Activated T-helper 2 cell treated with anti-CD3 and anti-CD28 coated beads, Interferon-gamma antibody, Interleukin-2, Interleukin-4, amounts not matched to agents 10 μg/mL and 5 μg/mL and 100 μg/mL, durations not matched to agents 14 hours and 24 hours and 36 hours (primary cell): ENCODE measurements at regions of chr6 and their contacts with region 1.

Region 1: DNA sequence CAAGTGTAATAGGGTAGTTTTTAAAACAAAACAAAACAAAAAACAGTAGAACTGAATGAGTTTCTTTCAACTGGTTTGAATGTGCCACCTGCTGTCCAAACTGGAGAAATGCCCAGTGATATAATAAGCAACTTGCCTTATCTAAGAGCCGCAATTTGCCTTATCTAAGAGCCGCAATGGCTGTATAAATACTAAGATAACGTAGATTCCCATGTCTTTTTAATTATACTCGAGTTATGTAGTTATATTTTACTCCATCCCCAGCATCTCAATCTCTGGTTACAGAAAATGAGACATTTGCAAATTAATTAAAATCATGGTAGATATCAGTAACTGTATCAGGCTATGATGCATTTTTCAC is 67.2 kb downstream of the RPP40 start:
- DNase-seq: no peak
- H3K4me3 Mint-ChIP-seq: no peak overlapping the region
- H3K27ac Mint-ChIP-seq: no peak overlapping the region
- H3K4me1 Mint-ChIP-seq: peaks cover 56% of the 10 kb centered on the region
- H3K27me3 Mint-ChIP-seq: no peaks in the 10 kb centered on the region

Region 2: DNA sequence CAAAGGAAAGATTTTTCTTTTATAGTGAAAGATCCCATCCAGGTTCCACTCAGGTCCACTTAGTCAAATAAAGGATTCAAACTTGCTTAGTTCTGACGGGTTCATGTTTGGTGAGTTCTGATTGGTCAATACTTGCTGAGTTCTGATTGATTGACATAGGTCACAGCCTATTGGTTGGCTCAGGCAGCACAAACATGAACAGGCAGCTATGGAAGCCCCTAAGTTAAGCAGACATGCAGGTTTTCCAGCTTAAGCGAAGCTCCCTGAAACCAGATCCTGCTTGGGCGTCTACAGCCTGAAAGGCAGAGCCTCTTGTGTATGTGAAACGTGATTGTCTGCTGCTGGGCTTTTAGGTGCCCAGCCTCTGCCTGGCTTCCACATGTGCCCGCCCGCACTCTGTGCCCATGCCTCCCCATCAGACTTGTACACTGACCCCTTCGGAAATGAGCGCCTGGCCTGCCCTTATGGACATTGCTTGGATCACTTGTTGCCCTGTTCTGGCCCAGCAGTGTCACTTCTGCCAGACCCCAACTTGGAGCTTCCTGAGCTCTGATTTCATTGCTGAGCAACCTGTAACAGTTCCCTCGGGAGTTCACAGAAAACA is 755.9 kb before region 1 on chr6:
- intact Hi-C with region 1: loop called (anchors 10 kb)
- DNase-seq: no peak
- H3K4me3 Mint-ChIP-seq: no peak overlapping the region
- H3K27ac Mint-ChIP-seq: no peak overlapping the region
- H3K4me1 Mint-ChIP-seq: peaks cover 11% of the 10 kb centered on the region
- H3K27me3 Mint-ChIP-seq: peaks cover 4% of the 10 kb centered on the region

Region 3: GRCh38 chr6:4637691-4638433 is 298.8 kb before region 1 on chr6:
- intact Hi-C with region 1: loop called (anchors 2 kb)
- DNase-seq: no peak
- H3K4me3 Mint-ChIP-seq: no peak overlapping the region
- H3K27ac Mint-ChIP-seq: peak overlapping the region; percentile 73
- H3K4me1 Mint-ChIP-seq: peaks cover 21% of the 10 kb centered on the region
- H3K27me3 Mint-ChIP-seq: no peaks in the 10 kb centered on the region

Region 4: GRCh38 chr6:4727671-4728435 is 208.8 kb before region 1 on chr6:
- intact Hi-C with region 1: loop called (anchors 5 kb)
- DNase-seq: no peak
- H3K4me3 Mint-ChIP-seq: no peak overlapping the region
- H3K27ac Mint-ChIP-seq: no peak overlapping the region
- H3K4me1 Mint-ChIP-seq: peaks cover 10% of the 10 kb centered on the region
- H3K27me3 Mint-ChIP-seq: peaks cover 10% of the 10 kb centered on the region

Region 5: DNA sequence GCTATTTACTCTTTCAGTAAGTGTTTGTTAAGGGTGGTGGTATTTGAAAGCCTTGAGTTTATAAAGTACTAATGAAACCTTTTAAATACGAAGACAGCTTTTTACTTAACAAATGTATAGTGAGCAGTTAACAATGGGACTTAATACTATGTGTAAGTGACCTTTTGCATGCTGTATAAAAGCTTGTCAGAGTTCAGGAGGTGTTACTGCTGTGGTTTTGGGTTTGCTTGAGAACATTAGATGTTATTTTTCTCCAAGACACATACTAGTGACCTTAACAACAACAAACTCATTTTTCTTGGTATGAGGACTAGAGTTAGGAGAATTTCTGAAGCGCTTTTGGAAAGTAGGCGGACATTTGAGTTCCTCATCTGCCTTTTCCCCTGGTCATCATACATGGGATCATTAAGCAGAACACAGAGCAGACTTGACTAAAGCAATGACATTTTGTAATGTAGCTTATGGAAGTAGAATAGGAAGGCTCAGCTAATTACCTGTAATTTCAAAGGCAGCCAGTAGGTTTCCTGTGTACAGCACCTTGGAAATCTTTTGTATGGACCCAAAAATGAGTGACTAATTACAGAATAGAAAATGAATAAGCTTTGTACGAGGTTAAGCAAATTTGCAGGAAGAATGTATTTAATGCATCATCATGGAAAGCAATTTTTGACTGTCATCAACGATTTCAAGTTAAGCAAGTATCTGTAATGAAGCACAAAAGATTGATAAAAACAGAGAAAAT is 146.3 kb before region 1 on chr6:
- intact Hi-C with region 1: loop called (anchors 5 kb)
- DNase-seq: no peak
- H3K4me3 Mint-ChIP-seq: no peak overlapping the region
- H3K27ac Mint-ChIP-seq: peak overlapping the region; percentile 74
- H3K4me1 Mint-ChIP-seq: peaks cover 35% of the 10 kb centered on the region
- H3K27me3 Mint-ChIP-seq: no peaks in the 10 kb centered on the region

Region 6: DNA sequence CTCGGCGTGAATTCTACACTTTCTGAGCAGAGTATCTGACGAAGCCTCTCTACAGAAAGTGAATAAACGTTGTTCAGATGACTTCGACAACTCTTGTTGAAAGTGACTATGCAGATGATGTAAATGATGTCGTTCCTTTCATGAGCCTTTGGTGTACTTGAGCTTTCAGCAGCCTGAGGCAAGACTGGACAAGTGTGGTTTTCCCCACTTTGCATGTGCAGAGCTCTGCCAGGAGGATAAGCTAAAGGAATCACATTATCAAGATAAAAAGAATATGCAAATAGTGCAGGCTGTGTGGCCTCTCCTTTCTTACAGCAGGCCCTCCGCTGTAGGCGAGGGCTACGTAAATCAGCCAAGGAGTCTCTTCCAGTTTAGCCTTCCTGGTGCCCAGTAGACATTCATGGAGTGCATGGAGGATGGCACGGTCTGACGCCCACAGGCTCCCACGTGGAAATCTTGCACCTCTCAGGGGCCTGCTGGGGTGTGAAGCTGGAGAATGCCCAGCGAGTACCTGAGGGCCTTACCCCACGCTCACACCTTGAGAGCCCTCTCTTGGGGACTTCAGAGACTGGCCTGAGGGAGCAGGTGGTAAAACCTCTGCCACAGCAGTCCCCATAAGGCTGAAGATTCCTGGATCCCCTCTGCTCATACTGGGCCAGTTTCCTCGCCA is 12.3 kb after region 1 on chr6:
- intact Hi-C with region 1: no loop called
- DNase-seq: no peak
- H3K4me3 Mint-ChIP-seq: no peak overlapping the region
- H3K27ac Mint-ChIP-seq: no peak overlapping the region
- H3K4me1 Mint-ChIP-seq: no peaks in the 10 kb centered on the region
- H3K27me3 Mint-ChIP-seq: no peaks in the 10 kb centered on the region

Region 7: DNA sequence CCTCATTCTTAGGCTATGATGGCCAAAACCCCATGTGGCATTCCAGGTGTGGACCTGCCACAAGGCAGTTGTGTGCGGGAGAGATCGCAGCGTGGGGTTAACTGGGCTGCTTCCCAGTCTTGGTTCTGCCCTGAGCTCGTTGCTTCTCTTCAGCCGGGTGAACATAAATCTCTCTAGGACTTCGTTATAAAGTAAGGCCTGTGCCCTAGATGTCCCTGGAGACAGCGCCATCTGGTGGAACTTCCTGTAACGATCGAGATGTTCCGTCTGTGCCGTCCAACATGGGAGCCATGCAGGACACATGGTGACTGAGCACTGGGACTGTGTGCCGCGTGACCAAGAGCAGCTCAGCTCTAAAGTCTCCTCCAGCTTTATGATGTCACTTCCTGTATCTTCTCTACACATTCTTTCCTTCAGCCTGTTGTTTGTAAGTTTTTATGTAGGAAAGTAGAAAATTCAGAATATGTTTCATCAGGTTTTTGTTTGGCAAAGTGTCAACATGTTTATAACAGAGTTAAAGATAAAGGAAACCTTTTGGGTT is 94.0 kb after region 1 on chr6:
- intact Hi-C with region 1: loop called (anchors 5 kb)
- DNase-seq: peak; percentile 68
- H3K4me3 Mint-ChIP-seq: no peak overlapping the region
- H3K27ac Mint-ChIP-seq: no peak overlapping the region
- H3K4me1 Mint-ChIP-seq: peaks cover 7% of the 10 kb centered on the region
- H3K27me3 Mint-ChIP-seq: peaks cover 4% of the 10 kb centered on the region